Naive thymus-derived CD8-positive, alpha-beta T cell (primary cell): ENCODE measurements at regions of chr19 and their contacts with region 1.

Region 1: GRCh38 chr19:38315657-38316476 is at the start of gene YIF1B:
- DNase-seq: peak; percentile 90 to 97 (median 94)
- ATAC-seq: peak; percentile 88
- H3K4me3 Mint-ChIP-seq: peak within 1 kb of the TSS; percentile 79 to 94 (median 90)
- H3K27ac Mint-ChIP-seq: peak within 1 kb of the TSS; percentile 91 to 98 (median 94)
- H3K4me1 Mint-ChIP-seq: peaks cover 18 to 54% (median 42%) of the 10 kb centered on the region in 4 donors
- H3K27me3 Mint-ChIP-seq: no peaks in the 10 kb centered on the region
- polyA plus RNA-seq, gene YIF1B: 40.7 to 47.8 (median 44.9) TPM

Region 2: DNA sequence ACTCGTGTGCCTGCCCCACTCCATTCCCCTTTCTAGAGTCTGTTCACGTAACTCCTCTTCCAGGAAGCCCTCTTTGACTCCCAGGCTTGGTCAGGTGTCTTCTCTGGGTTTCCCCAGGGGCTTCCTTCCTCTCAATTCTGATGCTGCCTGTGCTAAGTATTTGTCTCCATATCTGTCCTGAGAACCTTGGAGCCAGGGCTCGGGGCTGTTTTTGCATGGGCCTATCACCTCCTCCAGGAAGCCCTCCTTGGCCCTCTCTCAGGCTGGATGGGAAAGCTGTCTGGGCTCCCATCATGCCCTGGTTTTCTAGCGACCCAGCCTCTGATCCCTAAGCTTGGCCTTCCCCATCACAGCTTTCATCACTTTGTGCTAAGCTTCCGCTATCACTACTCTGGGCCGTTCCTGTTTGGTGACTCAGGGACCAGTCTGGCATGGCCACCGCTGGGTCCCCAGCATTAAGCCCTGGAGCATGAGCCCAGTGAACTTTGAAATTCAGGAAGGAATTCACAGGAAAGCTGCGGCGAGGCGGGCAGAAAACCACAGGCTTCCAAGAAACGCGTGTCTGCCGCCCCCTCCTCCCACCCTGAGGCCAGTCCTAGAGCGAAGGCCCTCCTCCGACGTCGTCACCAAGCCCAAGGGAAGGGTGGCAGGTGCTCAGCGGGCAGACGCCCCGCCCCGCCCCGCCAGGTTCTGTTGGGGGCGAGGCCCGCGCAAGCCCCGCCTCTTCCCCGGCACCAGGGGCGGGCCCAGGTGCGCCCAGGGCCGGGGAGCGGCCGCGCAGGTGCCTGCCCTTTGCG is 52.0 kb before region 1 on chr19:
- POLR2A ChIA-PET with region 1: interaction called, 11 read pairs
- DNase-seq: peak in 9 of 10 donors; percentile 71 to 88 (median 79)
- ATAC-seq: peak; percentile 78 to 80
- H3K4me3 Mint-ChIP-seq: peak overlapping the region; percentile 77 to 94 (median 88)
- H3K27ac Mint-ChIP-seq: peak overlapping the region in 9 of 10 donors; percentile 63 to 95 (median 82)
- H3K4me1 Mint-ChIP-seq: peaks cover 27 to 45% (median 41%) of the 10 kb centered on the region in 4 donors
- H3K27me3 Mint-ChIP-seq: peaks cover 0 to 4% (median 0%) of the 10 kb centered on the region in 5 donors

Region 3: DNA sequence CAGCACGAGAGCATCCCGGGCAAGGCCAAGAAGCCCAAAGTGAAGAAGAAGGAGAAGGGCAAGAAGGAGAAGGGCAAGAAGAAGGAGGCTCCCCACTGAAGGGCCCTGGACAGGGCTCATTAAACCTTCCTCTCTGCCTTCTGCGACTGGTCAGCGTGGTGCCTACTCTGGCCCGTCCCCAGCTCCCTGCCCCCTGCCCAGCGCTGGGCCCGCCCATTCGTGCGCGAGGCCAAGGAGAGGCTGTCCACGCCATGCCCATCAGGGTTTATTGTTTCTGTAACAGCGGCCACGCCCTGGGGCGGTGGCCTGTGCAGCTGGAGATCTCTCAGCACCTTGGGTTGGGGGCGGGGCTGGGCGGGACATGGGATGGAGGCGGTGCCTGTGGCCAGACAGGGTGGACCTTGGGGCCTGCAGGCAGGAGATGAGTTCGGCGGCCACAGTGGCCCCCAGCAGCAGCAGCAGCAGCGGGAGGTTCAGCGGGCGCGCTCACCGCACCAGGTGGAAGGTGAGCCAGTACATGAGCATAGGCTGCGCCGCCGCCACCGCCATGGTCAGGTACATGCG is 10.9 kb before region 1 on chr19:
- POLR2A ChIA-PET with region 1: no interaction called
- DNase-seq: no peak
- ATAC-seq: no peak
- H3K4me3 Mint-ChIP-seq: no peak overlapping the region
- H3K27ac Mint-ChIP-seq: no peak overlapping the region
- H3K4me1 Mint-ChIP-seq: peaks cover 0 to 3% (median under 1%) of the 10 kb centered on the region in 4 donors
- H3K27me3 Mint-ChIP-seq: no peaks in the 10 kb centered on the region

Region 4: GRCh38 chr19:38326591-38326990 is 10.7 kb after region 1 on chr19:
- POLR2A ChIA-PET with region 1: no interaction called
- DNase-seq: no peak
- ATAC-seq: no peak
- H3K4me3 Mint-ChIP-seq: no peak overlapping the region
- H3K27ac Mint-ChIP-seq: no peak overlapping the region
- H3K4me1 Mint-ChIP-seq: peaks cover 8 to 14% (median 10%) of the 10 kb centered on the region in 4 donors
- H3K27me3 Mint-ChIP-seq: no peaks in the 10 kb centered on the region